ENCODE measurements at regions of chr19 and their contacts with region 1.

Region 1: DNA sequence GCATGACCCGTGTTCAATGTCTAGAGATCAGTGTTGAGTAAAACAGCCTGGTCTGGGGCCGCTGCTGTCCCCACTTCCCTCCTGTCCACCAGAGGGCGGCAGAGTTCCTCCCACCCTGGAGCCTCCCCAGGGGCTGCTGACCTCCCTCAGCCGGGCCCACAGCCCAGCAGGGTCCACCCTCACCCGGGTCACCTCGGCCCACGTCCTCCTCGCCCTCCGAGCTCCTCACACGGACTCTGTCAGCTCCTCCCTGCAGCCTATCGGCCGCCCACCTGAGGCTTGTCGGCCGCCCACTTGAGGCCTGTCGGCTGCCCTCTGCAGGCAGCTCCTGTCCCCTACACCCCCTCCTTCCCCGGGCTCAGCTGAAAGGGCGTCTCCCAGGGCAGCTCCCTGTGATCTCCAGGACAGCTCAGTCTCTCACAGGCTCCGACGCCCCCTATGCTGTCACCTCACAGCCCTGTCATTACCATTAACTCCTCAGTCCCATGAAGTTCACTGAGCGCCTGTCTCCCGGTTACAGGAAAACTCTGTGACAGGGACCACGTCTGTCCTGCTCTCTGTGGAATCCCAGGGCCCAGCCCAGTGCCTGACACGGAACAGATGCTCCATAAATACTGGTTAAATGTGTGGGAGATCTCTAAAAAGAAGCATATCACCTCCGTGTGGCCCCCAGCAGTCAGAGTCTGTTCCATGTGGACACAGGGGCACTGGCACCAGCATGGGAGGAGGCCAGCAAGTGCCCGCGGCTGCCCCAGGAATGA is 1.5 kb upstream of the CEACAM5 start:
- DNase-seq: peak; percentile 84
- ATAC-seq: peak; percentile 96
- H3K4me3 Mint-ChIP-seq: peak overlapping the region; percentile 28
- H3K27ac Mint-ChIP-seq: no peak overlapping the region
- H3K4me1 Mint-ChIP-seq: peaks cover 3% of the 10 kb centered on the region
- H3K27me3 Mint-ChIP-seq: peaks cover 26% of the 10 kb centered on the region

Region 2: DNA sequence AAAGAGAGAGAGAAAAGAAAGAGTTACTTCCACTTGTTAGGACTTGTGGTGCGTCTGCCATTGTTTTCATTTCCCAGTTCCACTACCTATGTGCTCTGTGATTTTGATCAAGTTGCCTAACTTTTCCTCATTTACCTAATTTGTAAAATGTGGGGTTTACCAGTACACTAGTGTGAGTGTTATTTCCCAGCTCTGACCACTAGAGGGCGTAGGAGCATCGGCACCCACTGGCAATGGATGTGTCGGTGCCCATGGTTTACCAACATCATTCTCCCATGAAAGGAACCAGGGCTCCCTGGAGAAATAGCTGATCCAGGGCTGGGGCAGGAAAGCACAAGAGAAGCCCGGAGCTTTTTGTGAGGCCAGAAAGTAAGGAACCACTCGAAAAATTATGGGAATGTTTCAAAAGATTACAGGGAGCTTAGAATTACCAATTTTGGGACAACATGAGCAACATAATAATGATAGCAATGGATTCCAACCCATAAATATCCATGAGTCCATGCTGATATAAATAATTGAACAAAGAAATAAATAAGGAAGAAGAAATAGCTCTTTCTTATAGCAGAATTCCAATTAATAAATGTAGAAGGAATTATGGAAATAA is 64.9 kb before region 1 on chr19:
- CTCF ChIA-PET with region 1: interaction called, 9 read pairs
- POLR2A ChIA-PET with region 1: no interaction called
- intact Hi-C with region 1: loop called in 1 of 2 experiments (anchors 5 kb)
- DNase-seq: peak; percentile 82
- ATAC-seq: peak; percentile 76
- H3K4me3 Mint-ChIP-seq: no peak overlapping the region
- H3K27ac Mint-ChIP-seq: no peak overlapping the region
- H3K4me1 Mint-ChIP-seq: peaks cover 19% of the 10 kb centered on the region
- H3K27me3 Mint-ChIP-seq: peaks cover 7% of the 10 kb centered on the region

Region 3: DNA sequence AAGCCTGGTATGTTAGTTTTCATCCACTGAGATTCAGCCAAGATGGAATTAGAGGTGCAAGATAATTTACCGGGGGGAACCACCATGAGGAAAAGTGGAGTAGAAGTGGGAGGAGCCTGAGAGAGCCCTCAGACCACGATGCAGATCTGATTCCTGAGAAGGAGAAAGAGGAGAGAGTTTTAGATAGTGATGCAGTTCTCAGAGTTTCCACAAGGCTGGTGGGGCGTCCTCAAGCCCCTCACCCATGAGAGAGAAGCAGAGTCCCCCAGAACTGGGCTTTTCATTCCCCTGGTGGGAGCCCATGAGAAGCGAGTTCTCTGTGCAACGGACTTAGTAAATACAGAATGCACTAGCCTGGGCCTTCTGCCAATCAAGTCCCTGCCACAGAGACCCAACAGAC is 19.6 kb after region 1 on chr19:
- CTCF ChIA-PET with region 1: interaction called, 11 read pairs
- POLR2A ChIA-PET with region 1: no interaction called
- intact Hi-C with region 1: no loop called
- DNase-seq: no peak
- ATAC-seq: no peak
- H3K4me3 Mint-ChIP-seq: no peak overlapping the region
- H3K27ac Mint-ChIP-seq: no peak overlapping the region
- H3K4me1 Mint-ChIP-seq: no peaks in the 10 kb centered on the region
- H3K27me3 Mint-ChIP-seq: peaks cover 43% of the 10 kb centered on the region

Region 4: GRCh38 chr19:41740415-41741243 is 33.7 kb after region 1 on chr19:
- CTCF ChIA-PET with region 1: interaction called, 25 read pairs
- POLR2A ChIA-PET with region 1: no interaction called
- intact Hi-C with region 1: no loop called
- DNase-seq: peak; percentile 37
- ATAC-seq: peak; percentile 91
- H3K4me3 Mint-ChIP-seq: no peak overlapping the region
- H3K27ac Mint-ChIP-seq: no peak overlapping the region
- H3K4me1 Mint-ChIP-seq: peaks cover 21% of the 10 kb centered on the region
- H3K27me3 Mint-ChIP-seq: peaks cover 42% of the 10 kb centered on the region

Region 5: DNA sequence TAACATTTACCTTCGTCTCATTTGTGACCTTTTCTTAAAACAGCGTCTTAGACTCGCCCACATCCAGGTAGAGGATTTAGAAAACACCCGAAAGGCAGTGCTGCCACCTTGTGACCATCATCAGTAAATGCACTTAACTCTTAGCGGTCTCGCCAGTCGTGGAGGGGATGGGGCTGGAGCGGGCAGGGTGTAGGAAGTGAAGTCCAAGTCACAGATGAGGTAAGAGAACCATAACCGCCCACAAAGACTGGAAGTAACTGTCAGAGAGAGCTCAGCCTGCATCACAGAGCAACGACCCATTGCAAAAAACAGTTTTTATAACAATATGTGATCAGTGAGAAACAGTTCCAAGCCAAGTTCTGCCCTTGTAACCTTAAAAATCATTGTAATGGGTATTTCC is 78.7 kb after region 1 on chr19:
- CTCF ChIA-PET with region 1: interaction called, 10 read pairs
- POLR2A ChIA-PET with region 1: no interaction called
- intact Hi-C with region 1: loop called in 1 of 2 experiments (anchors 2 kb)
- DNase-seq: peak; percentile 85
- ATAC-seq: peak; percentile 95
- H3K4me3 Mint-ChIP-seq: no peak overlapping the region
- H3K27ac Mint-ChIP-seq: no peak overlapping the region
- H3K4me1 Mint-ChIP-seq: peaks cover 17% of the 10 kb centered on the region
- H3K27me3 Mint-ChIP-seq: peaks cover 51% of the 10 kb centered on the region

Measured in activated CD4-positive, alpha-beta T cell treated with anti-CD3 and anti-CD28 coated beads for 36 hours (primary cell).